ENCODE measurements at regions of chrX and their contacts with region 1.

Region 1: DNA sequence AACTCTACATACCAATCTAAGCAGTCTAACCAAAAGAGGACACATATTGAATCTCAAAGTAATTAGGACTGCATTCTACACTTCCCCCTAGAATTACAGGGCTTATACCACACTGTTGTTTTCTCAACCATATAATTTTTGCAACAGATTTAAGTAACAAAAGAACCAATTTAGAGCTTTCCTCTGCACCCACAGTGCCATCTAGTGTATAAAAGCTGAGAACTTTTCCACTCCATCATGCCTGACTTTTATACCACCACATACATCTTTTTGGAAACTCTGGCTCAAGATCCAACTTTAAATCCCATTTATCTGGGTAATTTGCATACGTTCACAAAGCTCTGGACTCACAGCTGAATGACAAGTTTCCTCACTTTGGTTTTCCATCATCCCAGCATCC is 99.5 kb downstream of the EFHC2 start:
- DNase-seq: no peak
- H3K4me3 ChIP-seq: no peak overlapping the region
- CTCF ChIP-seq: peak; percentile 22

Region 2: GRCh38 chrX:43836435-43837184 is 407.4 kb before region 1 on chrX:
- CTCF ChIA-PET with region 1: interaction called, 12 read pairs
- POLR2A ChIA-PET with region 1: no interaction called
- DNase-seq: no peak
- H3K4me3 ChIP-seq: no peak overlapping the region
- CTCF ChIP-seq: peak; percentile 27

Region 3: GRCh38 chrX:43949669-43950068 is 294.3 kb before region 1 on chrX:
- CTCF ChIA-PET with region 1: interaction called, 11 read pairs
- POLR2A ChIA-PET with region 1: no interaction called
- DNase-seq: no peak
- H3K4me3 ChIP-seq: no peak overlapping the region
- CTCF ChIP-seq: peak; percentile 37

Region 4: DNA sequence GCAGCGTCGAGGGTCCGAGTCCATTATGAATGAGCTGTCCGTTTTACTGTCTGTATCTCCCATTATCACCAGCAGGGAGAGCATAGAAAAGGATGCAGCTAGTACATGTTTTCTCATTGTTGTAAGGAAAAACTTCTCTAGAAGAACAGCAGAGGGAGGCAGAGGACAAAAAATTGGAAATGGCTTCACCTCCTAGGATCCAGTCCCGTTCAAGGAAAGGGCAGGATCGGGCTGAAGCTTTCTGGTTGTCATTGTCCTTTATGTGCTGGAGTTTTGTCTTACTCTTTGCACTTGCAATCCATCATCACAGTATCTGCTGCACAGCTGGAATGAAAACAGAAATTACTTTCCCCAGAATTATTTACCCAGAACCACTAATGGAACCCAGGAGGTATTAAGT is 285.5 kb before region 1 on chrX:
- CTCF ChIA-PET with region 1: interaction called, 137 read pairs
- POLR2A ChIA-PET with region 1: no interaction called
- DNase-seq: peak; percentile 46
- H3K4me3 ChIP-seq: no peak overlapping the region
- CTCF ChIP-seq: peak; percentile 53

Region 5: DNA sequence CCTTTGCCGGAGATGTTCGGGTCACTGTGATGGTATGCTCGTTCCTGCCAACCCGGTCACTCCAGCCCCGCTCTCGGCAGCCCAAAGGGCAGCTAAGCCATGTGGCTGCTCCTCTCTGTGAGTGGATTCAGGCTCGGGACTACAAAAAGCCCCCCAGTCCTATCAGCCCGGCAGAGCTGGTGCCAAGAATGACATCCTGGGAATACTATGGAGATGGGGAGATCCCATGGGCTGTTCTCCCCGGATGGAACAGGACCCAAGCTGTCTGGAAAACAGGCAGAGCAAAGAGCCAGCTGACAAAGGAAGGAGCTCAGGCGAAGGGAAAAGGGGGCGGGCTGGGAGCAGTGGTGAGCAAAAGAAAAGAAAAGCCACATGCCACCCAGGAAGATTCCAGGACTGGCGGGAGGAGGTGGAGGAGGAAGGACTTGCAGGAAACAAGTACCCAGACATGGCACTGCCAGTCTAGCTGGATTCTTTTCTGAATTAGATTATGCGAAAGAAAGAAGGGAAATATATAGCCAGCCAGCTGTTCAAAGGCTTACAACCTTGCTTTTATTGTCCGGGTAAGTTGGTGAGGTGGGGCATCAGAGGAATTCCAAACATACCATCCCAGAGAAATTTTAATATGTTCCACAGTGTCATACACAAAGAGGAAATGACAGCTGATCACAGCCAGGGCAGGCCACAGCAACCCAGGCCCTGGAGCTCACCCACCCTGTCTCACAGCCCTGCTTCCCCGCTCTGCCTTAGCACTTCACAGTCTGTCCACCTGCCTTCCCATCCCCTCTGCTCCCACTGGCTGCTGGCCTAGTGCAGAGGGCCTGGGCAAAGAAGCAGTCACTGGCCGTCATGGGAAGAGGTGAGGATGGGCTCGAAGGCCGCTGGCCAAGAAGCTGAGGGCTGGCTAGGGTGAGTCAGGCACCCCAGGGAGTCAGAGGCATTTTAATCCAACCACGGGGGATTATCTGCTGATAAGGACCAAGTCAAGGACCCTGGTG is 274.2 kb before region 1 on chrX:
- CTCF ChIA-PET with region 1: interaction called, 12 read pairs
- POLR2A ChIA-PET with region 1: no interaction called
- DNase-seq: no peak
- H3K4me3 ChIP-seq: no peak overlapping the region
- CTCF ChIP-seq: no peak

Measured in AG04449 (cell line).